Gastrocnemius medialis (tissue), 4 donors: ENCODE measurements at regions of chr9 and their contacts with region 1.

Region 1: DNA sequence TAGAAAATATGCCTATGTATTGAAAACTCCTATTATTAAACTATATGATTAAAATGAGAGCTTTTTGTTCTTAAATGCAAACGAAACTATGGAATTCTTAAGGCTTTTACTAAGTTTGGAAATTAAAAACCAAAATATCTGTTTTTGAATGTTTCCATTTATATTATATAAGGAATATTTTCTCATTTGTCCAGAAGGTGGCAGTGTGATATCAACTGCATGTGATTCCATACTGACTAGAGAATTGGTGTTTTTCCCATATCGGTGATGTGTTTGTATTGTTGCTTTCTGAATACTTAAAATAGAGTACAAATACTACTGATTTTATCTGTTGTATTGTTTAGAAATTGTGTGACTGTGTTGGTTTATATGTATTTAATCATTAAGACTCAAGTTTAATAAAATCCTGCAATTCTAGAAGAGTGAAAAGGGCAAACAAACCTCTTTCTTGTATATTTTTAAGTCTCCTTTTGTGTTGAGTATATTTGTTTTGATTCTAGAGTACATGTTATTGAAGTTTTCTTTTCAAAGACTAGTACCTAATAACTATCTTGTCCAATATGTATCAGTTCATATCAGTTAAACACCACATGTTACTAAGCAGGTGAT is 320.8 kb downstream of the CCDC171 start:
- DNase-seq: no peak
- ATAC-seq: no peak
- H3K4me3 ChIP-seq: no peak overlapping the region
- H3K27ac ChIP-seq: no peak overlapping the region
- H3K4me1 ChIP-seq: no peaks in the 10 kb centered on the region
- H3K27me3 ChIP-seq: no peaks in the 10 kb centered on the region
- CTCF ChIP-seq: peak; percentile 23 to 59 (median 41)
- POLR2A ChIP-seq: no peak

Region 2: DNA sequence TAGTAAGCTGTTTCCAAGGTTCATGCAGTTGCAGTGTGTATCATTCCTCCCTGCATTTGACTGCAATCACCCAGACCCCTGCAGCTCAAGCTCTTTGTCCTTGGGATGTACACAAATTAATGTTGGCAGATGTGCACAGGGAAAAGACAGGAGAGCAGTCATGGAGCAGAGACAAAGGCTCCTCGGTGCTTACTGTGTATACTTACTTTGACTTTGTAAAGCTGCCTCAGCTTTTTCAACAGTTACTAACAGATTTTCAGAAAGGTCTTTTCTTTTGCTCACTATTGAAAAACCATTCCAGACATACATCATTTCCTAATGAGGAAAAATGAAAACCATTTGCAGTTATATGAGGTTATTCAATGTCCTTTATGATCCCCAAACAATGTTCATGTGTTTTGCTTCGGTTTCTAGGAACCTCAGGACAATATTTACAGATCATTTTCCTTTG is 691.5 kb before region 1 on chr9:
- in situ Hi-C with region 1: no loop called
- intact Hi-C with region 1: no loop called
- DNase-seq: no peak
- ATAC-seq: no peak
- H3K4me3 ChIP-seq: no peak overlapping the region
- H3K27ac ChIP-seq: no peak overlapping the region
- H3K4me1 ChIP-seq: no peaks in the 10 kb centered on the region
- H3K27me3 ChIP-seq: no peaks in the 10 kb centered on the region
- CTCF ChIP-seq: no peak
- POLR2A ChIP-seq: no peak

Region 3: DNA sequence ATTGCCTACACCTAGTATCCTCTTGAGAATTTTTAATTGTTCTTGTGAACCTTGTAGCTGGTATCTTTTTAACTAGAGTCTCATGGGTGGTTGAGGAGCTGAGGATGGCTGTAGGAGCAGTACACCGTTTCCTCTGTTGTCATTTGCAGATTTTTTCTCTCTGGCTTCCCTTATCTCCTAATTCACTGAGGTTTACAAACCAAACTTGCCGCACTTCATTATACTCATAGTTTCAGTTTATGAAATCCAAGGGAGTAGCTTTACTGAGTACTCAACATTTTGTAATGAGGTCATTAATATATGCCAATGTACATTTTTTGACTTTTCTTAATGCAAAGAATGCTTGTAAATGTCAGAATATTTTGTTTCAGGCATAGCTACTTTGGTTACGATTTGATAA is 166.7 kb before region 1 on chr9:
- in situ Hi-C with region 1: no loop called
- intact Hi-C with region 1: no loop called
- DNase-seq: no peak
- ATAC-seq: no peak
- H3K4me3 ChIP-seq: no peak overlapping the region
- H3K27ac ChIP-seq: no peak overlapping the region
- H3K4me1 ChIP-seq: no peaks in the 10 kb centered on the region
- H3K27me3 ChIP-seq: no peaks in the 10 kb centered on the region
- CTCF ChIP-seq: no peak
- POLR2A ChIP-seq: no peak

Region 4: DNA sequence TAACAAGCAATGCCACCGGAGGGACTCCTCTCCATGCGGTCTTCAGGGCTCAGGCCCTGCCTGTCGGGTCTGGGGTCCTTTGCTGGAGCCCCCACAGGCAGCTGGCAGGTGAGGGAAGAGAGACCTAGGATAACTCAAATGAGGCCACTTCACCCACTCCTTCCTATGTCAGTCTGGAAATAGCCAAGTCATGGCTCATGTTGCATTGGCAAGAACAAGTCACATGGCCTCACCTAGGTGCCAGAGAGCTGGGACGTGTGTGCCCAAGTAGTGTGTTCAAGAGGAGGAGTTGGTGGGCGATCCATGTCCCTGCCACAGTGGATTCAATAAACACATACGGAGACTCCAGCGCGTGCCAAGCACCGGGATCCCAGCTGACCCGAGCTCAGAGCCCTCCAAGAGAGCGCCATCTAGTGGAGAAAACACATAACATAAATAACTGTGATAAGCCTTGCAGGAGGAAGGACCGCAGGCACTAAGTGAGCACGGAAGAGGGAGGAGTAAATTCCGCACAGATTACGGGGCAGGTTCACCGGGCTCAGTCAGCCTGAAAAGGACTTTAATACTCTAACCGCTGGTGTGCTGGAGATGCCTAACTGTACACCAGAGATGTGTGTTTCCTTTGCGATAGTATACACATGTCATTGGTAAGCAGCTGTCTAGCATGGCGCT is 260.0 kb after region 1 on chr9:
- in situ Hi-C with region 1: no loop called
- intact Hi-C with region 1: loop called (anchors 10 kb)
- DNase-seq: peak in 1 of 2 donors; percentile 21
- ATAC-seq: peak in 1 of 2 donors; percentile 40
- H3K4me3 ChIP-seq: no peak overlapping the region
- H3K27ac ChIP-seq: no peak overlapping the region
- H3K4me1 ChIP-seq: no peaks in the 10 kb centered on the region
- H3K27me3 ChIP-seq: no peaks in the 10 kb centered on the region
- CTCF ChIP-seq: peak in 4 of 5 experiments; percentile 5 to 45 (median 32)
- POLR2A ChIP-seq: no peak

Region 5: GRCh38 chr9:16653491-16654399 is 780.1 kb after region 1 on chr9:
- in situ Hi-C with region 1: no loop called
- intact Hi-C with region 1: no loop called
- DNase-seq: no peak
- ATAC-seq: peak in 1 of 2 donors; percentile 37
- H3K4me3 ChIP-seq: peak overlapping the region in 2 of 4 donors; percentile 7 to 19
- H3K27ac ChIP-seq: no peak overlapping the region
- H3K4me1 ChIP-seq: peaks cover 0 to 14% of the 10 kb centered on the region in 2 donors
- H3K27me3 ChIP-seq: no peaks in the 10 kb centered on the region
- CTCF ChIP-seq: no peak
- POLR2A ChIP-seq: no peak